ENCODE measurements at regions of chr1 and their contacts with region 1.

Region 1: DNA sequence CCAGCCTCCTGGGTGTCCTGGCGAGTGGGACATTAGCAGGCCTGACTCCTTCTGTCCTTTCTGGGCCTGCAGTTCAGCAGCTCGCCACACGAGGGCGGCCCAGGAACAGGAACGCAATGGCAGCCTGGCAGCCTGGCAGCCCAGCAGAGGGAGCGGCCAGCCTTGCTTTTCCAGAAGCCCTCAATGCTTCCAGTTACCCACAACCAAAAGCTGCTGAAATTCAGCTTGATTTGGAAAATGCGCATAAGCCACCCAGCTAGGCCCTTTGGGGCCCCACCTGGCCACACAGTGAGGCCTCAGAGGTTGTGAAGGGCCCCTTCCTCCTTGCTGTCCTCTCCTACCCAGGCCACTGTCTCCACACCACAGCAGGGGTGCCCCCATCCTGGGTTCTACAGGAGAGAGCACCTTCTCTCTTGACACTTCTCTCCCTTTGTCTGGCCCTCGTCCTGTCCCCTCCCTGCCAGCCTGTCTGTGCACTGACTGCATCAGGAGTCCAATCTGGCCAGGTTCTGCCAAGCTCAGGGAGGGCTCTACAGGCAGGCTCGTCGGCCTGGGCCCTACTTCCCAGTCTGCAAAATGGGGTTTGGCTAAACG is 103.4 kb upstream of the VAMP3 start:
- DNase-seq: peak; percentile 90
- ATAC-seq: peak; percentile 80 to 84

Region 2: GRCh38 chr1:7752512-7753417 is 85.0 kb after region 1 on chr1:
- intact Hi-C with region 1: loop called (anchors 1 to 2 kb)
- DNase-seq: peak; percentile 73
- ATAC-seq: peak; percentile 66 to 71

Region 3: DNA sequence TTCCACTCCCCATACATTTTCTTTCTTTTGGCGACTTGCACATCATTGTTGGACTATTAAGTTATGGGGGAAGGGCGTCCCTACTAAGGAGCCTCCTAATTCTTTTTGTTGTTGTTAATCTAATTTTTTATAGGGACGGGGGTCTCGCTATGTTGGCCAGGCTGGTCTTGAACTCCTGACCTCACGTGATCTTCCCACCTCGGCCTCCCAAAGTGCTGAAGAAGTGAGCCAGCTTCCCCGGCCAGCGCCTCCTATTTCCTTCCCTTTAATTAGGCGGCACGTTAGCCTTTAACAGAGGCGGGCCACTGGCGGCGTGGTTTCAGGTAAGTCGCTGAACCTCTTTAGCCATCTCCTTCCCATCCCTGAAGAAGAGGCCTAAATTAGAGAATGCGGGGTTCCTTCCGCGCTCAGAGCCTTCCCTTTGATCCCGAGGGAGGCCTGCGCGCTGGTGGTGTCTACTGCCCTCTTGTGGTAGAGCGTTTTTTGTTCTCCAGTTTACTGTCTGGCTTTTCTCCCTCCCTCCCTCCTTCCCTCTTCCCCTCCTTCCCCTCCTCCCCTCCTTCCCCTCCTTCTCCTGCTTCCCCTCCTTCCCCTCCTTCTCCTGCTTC is 234.9 kb after region 1 on chr1:
- intact Hi-C with region 1: loop called (anchors 5 to 10 kb)
- DNase-seq: peak; percentile 51
- ATAC-seq: peak; percentile 81 to 95

Measured in left cardiac atrium (tissue), 4 donors.